ENCODE measurements at regions of chrX and their contacts with region 1.

Region 1: GRCh38 chrX:103175944-103176753 is 38.8 kb upstream of the BEX4 start:
- DNase-seq: peak; percentile 16
- H3K4me3 Mint-ChIP-seq: no peak overlapping the region
- H3K27ac Mint-ChIP-seq: no peak overlapping the region
- H3K4me1 Mint-ChIP-seq: peaks cover 3% of the 10 kb centered on the region
- H3K27me3 Mint-ChIP-seq: peaks cover 5% of the 10 kb centered on the region

Region 2: GRCh38 chrX:102950908-102951866 is 225.0 kb before region 1 on chrX:
- intact Hi-C with region 1: loop called (anchors 1 kb)
- DNase-seq: peak; percentile 18
- H3K4me3 Mint-ChIP-seq: peak overlapping the region; percentile 38
- H3K27ac Mint-ChIP-seq: no peak overlapping the region
- H3K4me1 Mint-ChIP-seq: peaks cover 3% of the 10 kb centered on the region
- H3K27me3 Mint-ChIP-seq: no peaks in the 10 kb centered on the region

Region 3: DNA sequence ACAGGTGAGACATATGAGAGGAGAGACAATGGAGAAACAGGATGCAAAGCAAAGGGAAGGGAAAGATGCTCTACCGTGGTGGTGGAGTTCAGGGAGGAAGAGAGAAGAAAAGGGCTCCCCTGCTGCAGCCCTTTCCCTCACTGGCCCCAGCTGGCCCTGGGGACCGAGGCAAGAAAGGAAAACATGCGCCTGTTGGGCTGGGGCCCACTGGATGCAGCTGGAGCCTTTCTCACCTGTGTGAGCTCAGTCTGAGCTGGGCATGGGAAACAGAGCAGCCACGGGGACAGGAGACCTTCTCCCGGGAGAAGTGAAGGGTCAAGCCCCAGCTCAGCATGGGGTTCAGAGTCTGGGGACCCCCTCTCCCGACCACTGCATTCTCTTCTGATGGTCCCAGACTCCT is 95.1 kb before region 1 on chrX:
- intact Hi-C with region 1: no loop called
- DNase-seq: no peak
- H3K4me3 Mint-ChIP-seq: no peak overlapping the region
- H3K27ac Mint-ChIP-seq: no peak overlapping the region
- H3K4me1 Mint-ChIP-seq: no peaks in the 10 kb centered on the region
- H3K27me3 Mint-ChIP-seq: no peaks in the 10 kb centered on the region

Measured in activated T-helper 2 cell treated with anti-CD3 and anti-CD28 coated beads, Interferon-gamma antibody, Interleukin-2, Interleukin-4, amounts not matched to agents 10 μg/mL and 5 μg/mL and 100 μg/mL, durations not matched to agents 14 hours and 24 hours and 36 hours (primary cell).